SK-N-SH (cell line): ENCODE measurements at regions of chr10 and their contacts with region 1.

Region 1: GRCh38 chr10:116696919-116697318 is 45.4 kb downstream of the HSPA12A start:
- DNase-seq: no peak
- H3K4me3 ChIP-seq: no peak overlapping the region
- H3K27ac ChIP-seq: no peak overlapping the region
- H3K4me1 ChIP-seq: peaks cover 0 to 16% of the 10 kb centered on the region in 2 experiments; a peak in 1 of 4 replicates
- H3K27me3 ChIP-seq: no peaks in the 10 kb centered on the region
- CTCF ChIP-seq: no peak
- EP300 ChIP-seq: no peak
- RAD21 ChIP-seq: no peak

Region 2: GRCh38 chr10:116716381-116716780 is 19.5 kb after region 1 on chr10:
- CTCF ChIA-PET with region 1: interaction called, 10 read pairs
- POLR2A ChIA-PET with region 1: interaction called, 3 read pairs
- DNase-seq: no peak
- H3K4me3 ChIP-seq: no peak overlapping the region
- H3K27ac ChIP-seq: peak overlapping the region in 1 of 2 experiments; percentile 83; a peak in 2 of 4 replicates
- H3K4me1 ChIP-seq: peaks cover 0 to 73% of the 10 kb centered on the region in 2 experiments; a peak in 2 of 4 replicates
- H3K27me3 ChIP-seq: no peaks in the 10 kb centered on the region
- CTCF ChIP-seq: no peak
- EP300 ChIP-seq: no peak
- RAD21 ChIP-seq: no peak